Activated B cell treated with CpG ODN at 0.5 μM for 24 hours (primary cell): ENCODE measurements at regions of chr21 and their contacts with region 1.

Region 1: GRCh38 chr21:37767992-37768391 is 148.3 kb downstream of the KCNJ6 start:
- DNase-seq: no peak
- ATAC-seq: no peak
- H3K4me3 Mint-ChIP-seq: no peak overlapping the region
- H3K27ac Mint-ChIP-seq: no peak overlapping the region
- H3K4me1 Mint-ChIP-seq: no peaks in the 10 kb centered on the region
- H3K27me3 Mint-ChIP-seq: no peaks in the 10 kb centered on the region
- CTCF ChIP-seq: no peak

Region 2: DNA sequence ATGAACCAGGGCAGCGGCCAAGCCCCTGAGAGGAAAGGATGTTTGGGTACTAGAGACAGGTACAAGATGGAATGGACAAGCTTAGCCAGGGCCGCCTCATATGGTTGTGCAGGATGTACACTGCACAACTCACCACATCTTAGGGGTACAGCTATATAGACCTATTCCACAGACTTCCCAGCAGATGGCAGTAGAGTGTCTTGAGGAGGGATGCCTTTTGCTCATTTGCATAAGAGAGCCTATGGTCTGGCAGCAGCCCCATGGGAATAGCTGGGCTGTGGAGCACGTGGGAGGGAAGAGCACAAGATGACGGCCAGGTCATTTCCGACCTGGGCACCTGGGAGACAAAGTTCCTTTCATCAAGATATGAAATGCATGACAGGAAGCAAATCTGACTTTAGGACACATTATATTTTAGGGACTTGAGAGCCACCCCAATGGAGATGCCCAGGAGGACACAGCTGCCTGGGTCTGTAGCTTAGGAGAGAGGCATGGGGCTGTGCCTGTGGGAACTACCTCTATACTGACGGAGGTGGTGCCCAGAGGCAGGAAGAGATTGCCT is 67.3 kb before region 1 on chr21:
- CTCF ChIA-PET with region 1: no interaction called
- POLR2A ChIA-PET with region 1: no interaction called
- intact Hi-C with region 1: loop called (anchors 10 kb)
- DNase-seq: no peak
- ATAC-seq: peak; percentile 61
- H3K4me3 Mint-ChIP-seq: no peak overlapping the region
- H3K27ac Mint-ChIP-seq: no peak overlapping the region
- H3K4me1 Mint-ChIP-seq: no peaks in the 10 kb centered on the region
- H3K27me3 Mint-ChIP-seq: peaks cover 8% of the 10 kb centered on the region
- CTCF ChIP-seq: no peak